ENCODE measurements at regions of chr2 and their contacts with region 1.

Region 1: DNA sequence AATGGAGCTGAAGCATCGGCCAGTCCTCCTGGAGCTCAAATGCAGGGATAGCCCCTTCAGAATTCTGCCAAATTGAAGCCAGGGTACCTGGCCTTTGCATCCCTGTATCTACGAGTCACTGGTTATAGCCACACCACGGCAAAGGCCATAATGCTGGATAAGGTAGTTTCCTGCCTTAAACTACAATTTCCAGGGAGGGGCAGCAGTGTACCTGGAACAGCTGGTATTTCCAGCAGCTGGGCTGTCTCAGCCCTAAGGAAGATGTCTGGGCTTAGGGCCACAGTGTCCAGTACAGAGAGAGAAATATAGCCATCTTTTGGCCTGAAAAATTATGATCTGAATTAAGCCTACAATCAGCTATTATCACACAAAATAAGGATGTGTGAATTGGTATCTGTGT is 180.3 kb downstream of the GCA start:
- DNase-seq: peak; percentile 45
- ATAC-seq: peak; percentile 100
- H3K4me3 ChIP-seq: no peak overlapping the region
- H3K27ac ChIP-seq: no peak overlapping the region
- H3K4me1 ChIP-seq: no peaks in the 10 kb centered on the region
- H3K27me3 ChIP-seq: no peaks in the 10 kb centered on the region
- CTCF ChIP-seq: peak; percentile 93
- EP300 ChIP-seq: no peak
- POLR2A ChIP-seq: no peak
- RAD21 ChIP-seq: peak; percentile 93

Region 2: GRCh38 chr2:162607915-162608314 is 83.7 kb after region 1 on chr2:
- CTCF ChIA-PET with region 1: no interaction called
- POLR2A ChIA-PET with region 1: no interaction called
- in situ Hi-C with region 1: no loop called
- intact Hi-C with region 1: loop called (anchors 5 kb)
- DNase-seq: peak; percentile 65
- ATAC-seq: peak; percentile 100
- H3K4me3 ChIP-seq: no peak overlapping the region
- H3K27ac ChIP-seq: no peak overlapping the region
- H3K4me1 ChIP-seq: peaks cover 19% of the 10 kb centered on the region
- H3K27me3 ChIP-seq: no peaks in the 10 kb centered on the region
- CTCF ChIP-seq: no peak
- EP300 ChIP-seq: peak in 1 of 2 experiments; percentile 91; a peak in 1 of 4 replicates
- POLR2A ChIP-seq: no peak
- RAD21 ChIP-seq: no peak

Region 3: GRCh38 chr2:162677476-162677875 is 153.3 kb after region 1 on chr2:
- CTCF ChIA-PET with region 1: no interaction called
- POLR2A ChIA-PET with region 1: no interaction called
- in situ Hi-C with region 1: no loop called
- intact Hi-C with region 1: loop called (anchors 10 kb)
- DNase-seq: no peak
- ATAC-seq: no peak
- H3K4me3 ChIP-seq: no peak overlapping the region
- H3K27ac ChIP-seq: no peak overlapping the region
- H3K4me1 ChIP-seq: no peaks in the 10 kb centered on the region
- H3K27me3 ChIP-seq: no peaks in the 10 kb centered on the region; a peak in 1 of 5 replicates
- CTCF ChIP-seq: no peak
- EP300 ChIP-seq: no peak
- POLR2A ChIP-seq: no peak
- RAD21 ChIP-seq: no peak

Region 4: DNA sequence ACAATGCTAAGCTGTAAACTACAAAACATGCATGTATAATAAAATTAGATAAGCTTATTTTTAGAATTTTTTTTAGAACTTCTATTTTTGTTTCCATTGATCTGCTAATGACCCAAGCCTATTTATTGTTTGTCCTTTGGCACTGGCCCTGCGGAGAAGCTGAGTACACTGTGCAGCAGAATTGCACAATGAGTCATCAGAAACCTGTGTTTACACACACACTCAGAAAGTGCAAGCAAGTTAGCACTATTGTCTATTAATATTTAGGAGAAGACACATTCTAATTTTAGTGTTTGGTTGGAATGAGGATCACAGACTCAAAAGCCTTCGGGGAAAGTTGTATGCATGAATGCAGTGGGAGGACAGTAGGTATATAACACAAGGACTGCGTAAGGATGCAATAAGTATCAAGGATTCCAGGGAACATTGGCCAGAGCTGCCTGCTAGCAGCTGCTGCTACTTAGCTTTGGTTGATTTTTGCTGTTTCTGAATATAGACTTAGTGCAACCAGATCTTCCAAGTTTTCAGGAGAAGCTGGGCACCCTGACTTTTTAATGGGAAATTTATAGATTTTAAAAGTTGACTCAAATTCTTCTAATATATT is 186.2 kb after region 1 on chr2:
- CTCF ChIA-PET with region 1: no interaction called
- POLR2A ChIA-PET with region 1: no interaction called
- in situ Hi-C with region 1: no loop called
- intact Hi-C with region 1: loop called (anchors 1 kb)
- DNase-seq: peak; percentile 61
- ATAC-seq: peak; percentile 96
- H3K4me3 ChIP-seq: peak overlapping the region in 1 of 3 experiments; percentile 5; a peak in 1 of 6 replicates
- H3K27ac ChIP-seq: no peak overlapping the region
- H3K4me1 ChIP-seq: peaks cover 42% of the 10 kb centered on the region
- H3K27me3 ChIP-seq: no peaks in the 10 kb centered on the region
- CTCF ChIP-seq: no peak
- EP300 ChIP-seq: peak in 1 of 2 experiments; percentile 74; a peak in 2 of 4 replicates
- POLR2A ChIP-seq: no peak
- RAD21 ChIP-seq: no peak

Region 5: DNA sequence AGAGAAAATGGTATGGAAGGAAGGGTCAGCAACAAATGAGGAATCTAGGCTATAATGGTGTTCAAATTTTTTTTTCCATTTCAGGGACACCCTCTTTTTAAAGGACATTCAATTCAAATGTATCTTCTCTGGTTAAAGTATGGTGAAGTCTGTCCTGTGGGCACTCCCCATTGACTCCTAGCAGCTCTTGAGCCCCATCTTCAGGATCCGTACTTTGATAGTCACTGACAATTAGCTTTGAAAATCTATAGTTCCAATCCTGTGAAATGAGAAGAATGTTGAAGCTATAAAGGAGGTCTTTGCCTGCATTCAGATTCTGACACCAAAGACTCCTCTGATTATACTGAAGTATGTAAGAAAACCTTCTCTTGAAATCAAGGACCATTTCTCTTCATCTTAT is 271.1 kb after region 1 on chr2:
- CTCF ChIA-PET with region 1: interaction called, 10 read pairs
- POLR2A ChIA-PET with region 1: no interaction called
- in situ Hi-C with region 1: loop called (anchors 5 kb)
- intact Hi-C with region 1: loop called (anchors 1 kb)
- DNase-seq: peak; percentile 27
- ATAC-seq: peak; percentile 92
- H3K4me3 ChIP-seq: no peak overlapping the region
- H3K27ac ChIP-seq: no peak overlapping the region
- H3K4me1 ChIP-seq: 0 out of 2 replicates have a peak, but pooled peaks cover 6% of the 10 kb centered on the region
- H3K27me3 ChIP-seq: no peaks in the 10 kb centered on the region
- CTCF ChIP-seq: peak; percentile 75
- EP300 ChIP-seq: no peak
- POLR2A ChIP-seq: no peak
- RAD21 ChIP-seq: peak; percentile 44; the same call in 1 of the 2 replicates

Region 6: GRCh38 chr2:162890690-162891311 is 366.6 kb after region 1 on chr2:
- CTCF ChIA-PET with region 1: no interaction called
- POLR2A ChIA-PET with region 1: no interaction called
- in situ Hi-C with region 1: no loop called
- intact Hi-C with region 1: loop called (anchors 1 kb)
- DNase-seq: peak; percentile 62
- ATAC-seq: peak; percentile 86
- H3K4me3 ChIP-seq: no peak overlapping the region
- H3K27ac ChIP-seq: no peak overlapping the region
- H3K4me1 ChIP-seq: no peaks in the 10 kb centered on the region
- H3K27me3 ChIP-seq: no peaks in the 10 kb centered on the region; a peak in 1 of 5 replicates
- CTCF ChIP-seq: peak; percentile 86
- EP300 ChIP-seq: no peak
- POLR2A ChIP-seq: no peak
- RAD21 ChIP-seq: peak; percentile 51

Region 7: GRCh38 chr2:163132850-163133249 is 608.7 kb after region 1 on chr2:
- CTCF ChIA-PET with region 1: no interaction called
- POLR2A ChIA-PET with region 1: no interaction called
- in situ Hi-C with region 1: no loop called
- intact Hi-C with region 1: loop called (anchors 2 kb)
- DNase-seq: peak; percentile 5
- ATAC-seq: no peak
- H3K4me3 ChIP-seq: no peak overlapping the region
- H3K27ac ChIP-seq: no peak overlapping the region
- H3K4me1 ChIP-seq: no peaks in the 10 kb centered on the region
- H3K27me3 ChIP-seq: no peaks in the 10 kb centered on the region
- CTCF ChIP-seq: peak; percentile 42
- EP300 ChIP-seq: no peak
- POLR2A ChIP-seq: no peak
- RAD21 ChIP-seq: no peak

Measured in HepG2 (cell line).